RWPE1 (cell line): ENCODE measurements at regions of chr7 and their contacts with region 1.

Region 1: DNA sequence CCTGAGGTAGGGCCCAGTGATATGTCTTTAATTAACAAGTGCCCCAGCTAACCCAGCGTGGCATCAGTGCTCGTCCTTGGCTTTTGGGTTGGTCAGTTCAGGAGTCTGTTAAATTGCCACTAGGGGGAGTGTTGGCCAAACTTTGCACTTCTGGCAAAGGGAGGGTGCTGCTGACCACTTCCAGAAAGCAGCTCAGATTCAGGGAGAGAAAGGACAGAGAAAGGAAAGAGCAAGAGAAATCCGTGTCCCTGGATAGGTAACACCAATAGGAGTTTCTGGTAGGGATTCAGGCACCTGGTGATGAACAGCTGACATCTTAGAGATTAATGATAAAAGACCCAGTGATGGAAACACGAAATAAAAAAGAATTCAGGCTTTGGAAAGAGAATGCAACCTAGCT is 243.1 kb upstream of the AOAH start:
- DNase-seq: peak; percentile 61
- H3K27ac ChIP-seq: no peak overlapping the region
- CTCF ChIP-seq: peak; percentile 82

Region 2: DNA sequence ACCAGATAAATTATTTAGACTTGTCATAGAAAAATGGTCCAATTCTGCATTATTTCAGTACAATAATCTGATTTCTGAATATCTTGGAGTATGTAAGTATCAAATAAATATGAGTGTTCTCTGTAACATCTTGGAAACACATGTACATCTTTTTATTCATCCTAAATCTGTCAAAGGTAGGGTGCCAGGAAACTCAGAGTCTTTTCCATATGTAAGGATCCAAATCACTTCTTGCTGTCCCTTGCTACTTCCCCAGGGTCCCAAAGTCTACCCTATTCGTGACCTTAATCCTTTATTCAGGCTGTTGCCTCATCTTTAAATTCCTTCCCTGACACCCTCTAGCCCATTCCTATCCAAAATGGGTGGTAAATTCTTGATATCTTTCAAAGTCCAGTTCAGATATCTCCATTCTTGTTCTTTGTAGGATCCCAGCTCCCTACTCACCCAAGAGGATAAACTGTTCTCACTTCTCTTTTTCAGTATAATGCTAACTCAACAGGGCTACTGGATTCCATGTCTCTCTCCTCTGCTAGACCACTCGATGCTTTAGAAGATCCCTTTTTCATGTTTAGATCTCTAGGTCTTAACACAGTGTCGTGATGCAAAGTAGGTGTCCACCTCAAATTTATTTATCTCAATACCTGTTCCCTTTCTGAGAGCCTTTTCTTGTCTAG is 11.8 kb before region 1 on chr7:
- CTCF ChIA-PET with region 1: interaction called, 11 read pairs
- POLR2A ChIA-PET with region 1: no interaction called
- DNase-seq: no peak
- H3K27ac ChIP-seq: no peak overlapping the region
- CTCF ChIP-seq: no peak

Region 3: DNA sequence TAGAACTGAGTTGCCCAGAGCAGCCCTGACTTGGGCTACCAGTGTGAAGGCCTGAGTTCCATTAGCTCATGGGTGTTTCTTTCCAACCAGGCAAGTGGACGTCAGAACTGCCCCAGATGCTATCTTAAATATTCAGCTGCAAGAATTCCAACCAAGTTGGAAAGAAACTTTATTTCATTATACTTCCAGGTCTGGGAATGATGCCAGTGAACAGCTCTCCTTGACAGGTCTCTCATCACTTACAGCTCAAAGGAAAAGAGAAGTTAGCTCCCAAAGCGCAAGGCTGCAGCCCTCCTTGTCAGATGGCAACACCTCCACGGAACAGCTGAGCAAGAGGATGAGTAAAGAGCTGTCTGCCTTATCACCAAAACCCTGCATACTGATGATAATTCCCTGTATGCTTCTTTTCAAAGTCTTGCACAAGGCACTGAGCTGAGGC is 12.4 kb after region 1 on chr7:
- CTCF ChIA-PET with region 1: interaction called, 17 read pairs
- POLR2A ChIA-PET with region 1: no interaction called
- DNase-seq: no peak
- H3K27ac ChIP-seq: no peak overlapping the region
- CTCF ChIP-seq: no peak

Region 4: GRCh38 chr7:37145682-37146081 is 178.3 kb after region 1 on chr7:
- CTCF ChIA-PET with region 1: no interaction called
- POLR2A ChIA-PET with region 1: no interaction called
- DNase-seq: no peak
- H3K27ac ChIP-seq: no peak overlapping the region
- CTCF ChIP-seq: no peak